ENCODE measurements at regions of chr11 and their contacts with region 1.

Region 1: DNA sequence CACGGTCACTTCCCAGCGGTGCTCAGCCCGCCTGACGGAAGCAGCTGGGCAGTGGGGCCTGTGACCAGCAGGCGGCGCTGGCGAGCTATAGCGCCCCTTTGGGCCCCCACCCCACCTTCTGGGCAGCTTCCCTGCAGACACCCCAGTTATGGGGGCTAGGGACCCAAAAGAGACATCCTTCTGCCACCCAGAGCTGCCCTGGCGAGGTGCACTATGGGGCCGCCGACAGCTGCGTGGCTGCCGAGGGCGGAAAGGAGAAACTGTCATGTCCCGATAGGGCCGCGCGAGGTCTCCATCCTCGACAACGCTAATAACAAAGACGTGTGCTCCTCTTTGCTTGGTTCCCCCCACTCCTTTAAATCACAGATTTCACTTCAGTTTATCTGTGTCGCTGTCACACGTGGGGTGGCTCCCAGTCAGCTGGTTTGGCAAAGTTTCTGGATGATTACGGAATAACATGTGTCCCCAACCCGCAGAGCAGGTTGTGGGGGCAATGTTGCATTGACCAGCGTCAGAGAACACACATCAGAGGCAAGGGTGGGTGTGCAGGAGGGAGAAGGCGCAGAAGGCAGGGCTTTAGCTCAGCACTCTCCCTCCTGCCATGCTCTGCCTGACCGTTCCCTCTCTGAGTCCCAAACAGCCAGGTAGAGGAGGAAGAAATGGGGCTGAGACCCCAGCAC is 674 bp upstream of the MYO7A start:
- DNase-seq: peak; percentile 60
- ATAC-seq: peak; percentile 77
- H3K4me3 Mint-ChIP-seq: peak overlapping the region; percentile 28
- H3K27ac Mint-ChIP-seq: no peak overlapping the region
- H3K4me1 Mint-ChIP-seq: peaks cover 11% of the 10 kb centered on the region
- H3K27me3 Mint-ChIP-seq: peaks cover 8% of the 10 kb centered on the region

Region 2: GRCh38 chr11:76946245-76946644 is 181.1 kb before region 1 on chr11:
- CTCF ChIA-PET with region 1: no interaction called
- POLR2A ChIA-PET with region 1: no interaction called
- DNase-seq: no peak
- ATAC-seq: no peak
- H3K4me3 Mint-ChIP-seq: no peak overlapping the region
- H3K27ac Mint-ChIP-seq: no peak overlapping the region
- H3K4me1 Mint-ChIP-seq: peaks cover 10% of the 10 kb centered on the region
- H3K27me3 Mint-ChIP-seq: peaks cover 6% of the 10 kb centered on the region

Region 3: DNA sequence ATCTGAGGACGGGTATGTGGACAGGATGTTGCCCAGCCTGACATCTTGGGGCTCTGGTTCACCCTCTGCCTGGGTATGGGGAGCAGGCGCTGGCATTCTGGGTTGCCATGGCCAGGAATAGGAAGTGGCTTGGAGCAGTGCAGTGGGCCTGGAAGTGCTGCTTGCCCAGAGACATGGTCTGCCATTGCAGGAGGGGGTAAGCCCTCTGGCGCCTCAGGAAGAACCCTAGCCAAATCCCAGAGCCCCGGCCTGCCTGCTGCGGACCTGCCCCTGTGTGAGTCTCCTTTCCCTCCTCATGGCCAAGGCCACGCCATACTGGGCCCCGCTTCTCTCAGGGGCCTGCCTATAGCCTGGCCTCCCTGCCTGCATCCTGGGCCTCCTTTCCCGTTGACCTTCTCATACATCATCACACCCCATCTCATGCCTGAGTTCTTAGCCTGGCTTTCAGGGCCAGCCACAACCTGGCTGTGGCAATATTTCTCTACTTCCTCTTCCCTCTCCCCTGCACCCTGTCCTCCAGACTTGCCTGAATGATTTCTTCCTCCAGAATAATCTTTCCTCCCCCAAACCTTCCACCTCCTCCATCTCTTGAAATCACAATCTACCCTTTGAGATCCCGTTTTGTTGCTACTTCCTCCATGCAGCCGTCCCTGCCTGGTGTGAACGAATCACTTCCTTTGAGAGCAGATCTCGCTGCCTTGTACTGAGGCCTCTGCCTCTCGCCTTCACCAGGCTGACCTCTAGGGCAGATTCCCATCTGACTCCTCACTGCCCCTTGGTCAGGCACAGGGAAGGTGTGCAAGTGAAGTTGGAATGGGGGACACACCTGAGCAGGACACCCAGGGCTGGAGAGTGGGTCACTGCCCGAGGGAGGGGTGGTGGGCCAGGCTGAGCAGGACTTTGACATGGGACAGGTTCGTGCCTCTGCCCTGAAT is 55.4 kb before region 1 on chr11:
- CTCF ChIA-PET with region 1: no interaction called
- POLR2A ChIA-PET with region 1: no interaction called
- DNase-seq: no peak
- ATAC-seq: no peak
- H3K4me3 Mint-ChIP-seq: no peak overlapping the region
- H3K27ac Mint-ChIP-seq: peak overlapping the region; percentile 29
- H3K4me1 Mint-ChIP-seq: peaks cover 25% of the 10 kb centered on the region
- H3K27me3 Mint-ChIP-seq: peaks cover 24% of the 10 kb centered on the region

Region 4: DNA sequence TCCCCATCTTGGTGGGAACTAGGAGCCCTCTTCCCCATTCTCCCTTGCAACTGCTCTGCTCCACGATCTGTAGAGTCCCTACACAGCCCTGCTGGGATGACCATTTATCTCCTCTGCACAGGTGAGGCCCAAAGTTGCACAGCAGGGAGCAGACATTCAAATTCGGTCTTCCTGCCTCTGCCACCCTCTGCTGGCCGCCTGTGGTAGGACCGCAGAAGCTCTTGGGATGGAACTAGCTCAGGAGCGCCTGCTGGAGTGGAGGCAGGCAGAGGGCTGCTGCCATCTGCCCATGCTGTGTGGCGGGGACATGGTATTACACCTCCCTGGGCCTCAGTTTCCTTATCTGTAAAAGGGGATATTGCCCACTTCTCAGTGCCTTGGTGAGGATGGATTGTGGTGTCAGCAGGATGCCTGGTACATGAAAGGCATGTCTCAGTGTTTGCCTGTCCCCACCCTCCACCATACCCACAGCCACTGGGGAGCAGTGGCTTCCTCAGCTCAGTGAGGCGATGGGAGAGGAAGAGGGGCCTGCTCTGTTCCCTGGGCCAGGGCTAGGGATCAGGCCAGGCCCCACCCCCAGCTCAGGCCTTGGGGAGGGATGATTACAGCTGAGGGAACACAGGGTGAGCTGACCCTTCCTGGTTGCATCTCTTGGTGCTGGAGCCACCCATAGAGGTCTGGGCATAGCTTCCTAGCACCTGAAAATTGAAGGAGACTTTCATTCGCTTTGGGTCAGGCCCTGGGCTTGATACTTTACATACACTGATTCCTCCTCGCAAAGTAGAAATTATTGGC is 36.0 kb before region 1 on chr11:
- CTCF ChIA-PET with region 1: interaction called, 12 read pairs
- POLR2A ChIA-PET with region 1: no interaction called
- DNase-seq: peak; percentile 88
- ATAC-seq: peak; percentile 93
- H3K4me3 Mint-ChIP-seq: no peak overlapping the region
- H3K27ac Mint-ChIP-seq: no peak overlapping the region
- H3K4me1 Mint-ChIP-seq: peaks cover 7% of the 10 kb centered on the region
- H3K27me3 Mint-ChIP-seq: no peaks in the 10 kb centered on the region

Region 5: GRCh38 chr11:77140231-77140851 is 13.0 kb after region 1 on chr11:
- CTCF ChIA-PET with region 1: interaction called, 23 read pairs
- POLR2A ChIA-PET with region 1: no interaction called
- DNase-seq: no peak
- ATAC-seq: no peak
- H3K4me3 Mint-ChIP-seq: no peak overlapping the region
- H3K27ac Mint-ChIP-seq: no peak overlapping the region
- H3K4me1 Mint-ChIP-seq: peaks cover 17% of the 10 kb centered on the region
- H3K27me3 Mint-ChIP-seq: peaks cover 68% of the 10 kb centered on the region

Region 6: DNA sequence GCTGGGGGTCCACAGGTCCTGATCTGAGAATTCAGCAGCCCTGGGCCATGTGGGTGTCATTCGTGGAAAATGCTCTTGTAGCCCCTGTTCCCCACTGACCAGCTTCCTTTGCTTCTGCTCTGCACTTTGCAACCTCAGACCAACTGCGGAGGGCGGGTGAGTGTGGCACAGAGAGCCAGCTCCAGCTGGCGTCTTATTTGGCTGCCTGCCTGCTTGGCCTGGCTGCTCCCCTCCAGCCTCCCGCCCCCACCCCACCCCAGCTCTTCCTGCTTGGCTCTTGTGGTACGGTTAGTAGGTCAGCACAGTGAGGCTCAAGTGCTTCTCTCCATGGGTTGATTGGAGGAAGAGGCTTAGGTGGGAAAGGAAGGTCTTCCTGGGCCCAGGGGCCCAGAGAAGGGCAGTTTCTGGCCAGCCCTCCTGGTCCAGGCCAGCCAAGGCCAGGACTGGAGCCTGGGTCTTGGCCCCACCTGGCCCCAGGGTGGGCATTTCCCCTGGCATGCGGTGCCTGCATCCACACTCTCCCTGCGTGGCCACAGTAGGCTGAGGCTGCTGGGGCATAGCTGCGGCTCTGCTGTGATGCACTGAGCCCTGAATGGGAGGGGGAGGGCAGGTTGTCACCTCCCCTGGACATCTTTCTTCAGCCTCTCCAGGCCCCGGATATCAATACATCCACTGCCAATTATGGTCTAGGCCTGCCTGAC is 27.2 kb after region 1 on chr11:
- CTCF ChIA-PET with region 1: interaction called, 11 read pairs
- POLR2A ChIA-PET with region 1: no interaction called
- DNase-seq: no peak
- ATAC-seq: no peak
- H3K4me3 Mint-ChIP-seq: no peak overlapping the region
- H3K27ac Mint-ChIP-seq: no peak overlapping the region
- H3K4me1 Mint-ChIP-seq: peaks cover 41% of the 10 kb centered on the region
- H3K27me3 Mint-ChIP-seq: peaks cover 30% of the 10 kb centered on the region

Region 7: GRCh38 chr11:77187776-77188632 is 60.6 kb after region 1 on chr11:
- CTCF ChIA-PET with region 1: interaction called, 143 read pairs
- POLR2A ChIA-PET with region 1: no interaction called
- DNase-seq: peak; percentile 83
- ATAC-seq: peak; percentile 83
- H3K4me3 Mint-ChIP-seq: no peak overlapping the region
- H3K27ac Mint-ChIP-seq: no peak overlapping the region
- H3K4me1 Mint-ChIP-seq: no peaks in the 10 kb centered on the region
- H3K27me3 Mint-ChIP-seq: peaks cover 4% of the 10 kb centered on the region

Region 8: GRCh38 chr11:77547863-77548551 is 420.6 kb after region 1 on chr11:
- CTCF ChIA-PET with region 1: interaction called, 26 read pairs
- POLR2A ChIA-PET with region 1: no interaction called
- DNase-seq: peak; percentile 61
- ATAC-seq: no peak
- H3K4me3 Mint-ChIP-seq: no peak overlapping the region
- H3K27ac Mint-ChIP-seq: no peak overlapping the region
- H3K4me1 Mint-ChIP-seq: peaks cover 3% of the 10 kb centered on the region
- H3K27me3 Mint-ChIP-seq: no peaks in the 10 kb centered on the region